PC-9 (cell line): ENCODE measurements at regions of chr12 and their contacts with region 1.

Region 1: DNA sequence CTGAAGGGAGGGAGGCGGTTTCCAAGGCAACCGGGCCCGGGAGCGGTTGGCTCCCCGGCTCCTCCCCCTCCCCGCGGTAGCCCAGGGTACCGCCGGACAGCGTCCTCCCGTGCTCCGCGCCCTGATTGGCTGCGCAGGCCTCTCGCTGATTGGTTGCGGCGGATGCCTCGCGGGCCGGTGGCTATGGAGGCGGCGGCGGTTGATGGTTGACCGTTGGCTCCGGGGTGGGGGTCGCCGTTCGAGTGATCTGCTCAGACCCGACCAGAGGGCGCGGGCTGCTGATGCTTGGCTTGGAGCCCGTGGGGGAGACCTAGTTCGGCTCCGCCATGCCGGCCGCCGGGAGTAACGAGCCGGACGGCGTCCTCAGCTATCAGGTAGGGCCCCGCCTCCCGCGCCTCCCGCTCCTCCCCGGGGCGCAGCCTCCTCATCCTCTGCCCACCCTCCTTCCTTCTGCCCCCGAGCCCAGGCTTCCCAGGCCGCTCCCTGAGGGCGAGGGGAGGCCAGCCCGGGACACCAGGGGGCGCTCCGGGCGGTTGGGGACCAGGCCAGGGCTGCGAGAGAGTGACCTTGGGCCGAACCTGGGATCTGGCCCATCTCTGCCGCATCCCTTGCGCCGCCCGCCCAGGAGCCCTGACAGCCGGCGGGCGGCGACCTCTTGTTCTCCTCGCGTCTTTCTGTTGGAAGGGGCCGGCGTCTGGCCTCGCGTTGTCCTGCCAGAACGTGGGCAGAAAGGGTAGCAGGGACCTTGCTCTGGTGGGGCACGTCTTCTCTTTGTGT is at the start of gene SLC4A8:
- DNase-seq: peak in 1 of 2 experiments; percentile 53
- H3K4me3 ChIP-seq: no peak within 1 kb of the TSS
- H3K27ac ChIP-seq: no peak within 1 kb of the TSS
- H3K4me1 ChIP-seq: no peaks in the 10 kb centered on the region
- H3K27me3 ChIP-seq: no peaks in the 10 kb centered on the region
- CTCF ChIP-seq: peak; percentile 55; the same call in 1 of the 2 replicates
- total RNA-seq, gene SLC4A8: 2.6 and 3.0 TPM in 2 replicates

Region 2: GRCh38 chr12:51335931-51336330 is 88.9 kb before region 1 on chr12:
- CTCF ChIA-PET with region 1: no interaction called
- POLR2A ChIA-PET with region 1: interaction called, 16 read pairs
- intact Hi-C with region 1: no loop called
- DNase-seq: no peak
- H3K4me3 ChIP-seq: no peak overlapping the region
- H3K27ac ChIP-seq: no peak overlapping the region
- H3K4me1 ChIP-seq: peaks cover 19% of the 10 kb centered on the region
- H3K27me3 ChIP-seq: no peaks in the 10 kb centered on the region
- CTCF ChIP-seq: no peak

Region 3: GRCh38 chr12:51531978-51532497 is 107.2 kb after region 1 on chr12:
- CTCF ChIA-PET with region 1: interaction called, 6 read pairs
- POLR2A ChIA-PET with region 1: no interaction called
- intact Hi-C with region 1: loop called (anchors 1 kb)
- DNase-seq: peak in 1 of 2 experiments; percentile 73
- H3K4me3 ChIP-seq: no peak overlapping the region
- H3K27ac ChIP-seq: no peak overlapping the region
- H3K4me1 ChIP-seq: no peaks in the 10 kb centered on the region
- H3K27me3 ChIP-seq: peaks cover 14% of the 10 kb centered on the region
- CTCF ChIP-seq: peak; percentile 87

Region 4: DNA sequence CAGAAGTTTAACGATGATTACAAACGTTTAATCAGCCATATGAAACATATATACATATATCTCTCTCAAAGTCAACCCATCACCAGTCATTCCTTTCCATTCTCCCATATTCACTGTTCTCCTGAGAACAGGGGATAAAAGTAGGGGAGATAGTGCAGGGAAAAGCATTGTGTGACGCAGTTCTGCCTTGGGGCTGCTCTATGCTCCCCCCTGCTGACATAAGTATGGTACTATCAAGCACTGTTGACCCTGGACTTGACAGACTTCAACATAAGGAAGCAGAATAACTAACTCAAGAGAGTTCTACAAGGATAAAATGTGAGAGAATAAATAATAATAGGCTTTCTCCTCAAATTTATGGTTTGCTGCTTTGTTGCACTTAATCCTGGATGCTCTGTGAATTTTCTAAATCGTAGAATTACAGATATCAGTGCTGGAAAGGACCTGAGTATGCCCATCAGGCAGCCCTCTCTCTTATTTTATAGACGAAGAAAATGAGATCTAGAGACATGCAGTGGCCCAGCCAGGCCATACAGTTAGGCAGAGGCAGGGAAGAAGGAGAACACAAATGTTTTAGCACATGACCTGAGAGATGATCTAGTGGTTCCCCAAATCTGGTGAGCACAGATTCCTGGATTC is 253.4 kb after region 1 on chr12:
- CTCF ChIA-PET with region 1: no interaction called
- POLR2A ChIA-PET with region 1: no interaction called
- intact Hi-C with region 1: loop called (anchors 1 kb)
- DNase-seq: peak in 1 of 2 experiments; percentile 4
- H3K4me3 ChIP-seq: no peak overlapping the region
- H3K27ac ChIP-seq: no peak overlapping the region
- H3K4me1 ChIP-seq: no peaks in the 10 kb centered on the region
- H3K27me3 ChIP-seq: peaks cover 54% of the 10 kb centered on the region
- CTCF ChIP-seq: peak; percentile 68

Region 5: DNA sequence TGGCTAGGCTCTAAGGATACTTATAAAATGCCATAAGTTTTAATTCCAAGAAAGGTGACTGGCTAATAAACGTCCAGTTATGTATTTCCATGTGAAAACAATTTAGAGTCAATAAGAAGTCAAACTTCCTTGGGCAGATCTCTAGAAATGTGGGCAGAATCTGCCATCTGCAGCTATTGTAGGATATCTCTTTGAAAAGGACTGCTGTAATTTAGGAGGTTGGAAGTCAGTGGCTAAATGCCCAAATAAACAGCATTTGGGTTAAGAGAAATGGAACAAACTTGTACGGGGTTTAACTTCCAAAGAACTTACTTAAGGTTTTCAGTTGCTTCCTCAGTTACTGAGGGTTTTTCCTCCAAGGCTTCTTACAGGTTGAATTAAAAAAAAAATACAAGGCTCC is 302.1 kb after region 1 on chr12:
- CTCF ChIA-PET with region 1: no interaction called
- POLR2A ChIA-PET with region 1: no interaction called
- intact Hi-C with region 1: no loop called
- DNase-seq: no peak
- H3K4me3 ChIP-seq: no peak overlapping the region
- H3K27ac ChIP-seq: no peak overlapping the region
- H3K4me1 ChIP-seq: no peaks in the 10 kb centered on the region
- H3K27me3 ChIP-seq: peaks cover 61% of the 10 kb centered on the region
- CTCF ChIP-seq: no peak

Region 6: GRCh38 chr12:51823875-51824565 is 399.2 kb after region 1 on chr12:
- CTCF ChIA-PET with region 1: no interaction called
- POLR2A ChIA-PET with region 1: no interaction called
- intact Hi-C with region 1: loop called (anchors 5 kb)
- DNase-seq: peak; percentile 30 to 39
- H3K4me3 ChIP-seq: no peak overlapping the region
- H3K27ac ChIP-seq: no peak overlapping the region
- H3K4me1 ChIP-seq: no peaks in the 10 kb centered on the region
- H3K27me3 ChIP-seq: peaks cover 22% of the 10 kb centered on the region
- CTCF ChIP-seq: peak; percentile 61

Region 7: GRCh38 chr12:51871126-51871525 is 446.3 kb after region 1 on chr12:
- CTCF ChIA-PET with region 1: interaction called, 3 read pairs
- POLR2A ChIA-PET with region 1: no interaction called
- intact Hi-C with region 1: loop called (anchors 1 kb)
- DNase-seq: no peak
- H3K4me3 ChIP-seq: no peak overlapping the region
- H3K27ac ChIP-seq: no peak overlapping the region
- H3K4me1 ChIP-seq: no peaks in the 10 kb centered on the region
- H3K27me3 ChIP-seq: peaks cover 84% of the 10 kb centered on the region
- CTCF ChIP-seq: no peak

Region 8: DNA sequence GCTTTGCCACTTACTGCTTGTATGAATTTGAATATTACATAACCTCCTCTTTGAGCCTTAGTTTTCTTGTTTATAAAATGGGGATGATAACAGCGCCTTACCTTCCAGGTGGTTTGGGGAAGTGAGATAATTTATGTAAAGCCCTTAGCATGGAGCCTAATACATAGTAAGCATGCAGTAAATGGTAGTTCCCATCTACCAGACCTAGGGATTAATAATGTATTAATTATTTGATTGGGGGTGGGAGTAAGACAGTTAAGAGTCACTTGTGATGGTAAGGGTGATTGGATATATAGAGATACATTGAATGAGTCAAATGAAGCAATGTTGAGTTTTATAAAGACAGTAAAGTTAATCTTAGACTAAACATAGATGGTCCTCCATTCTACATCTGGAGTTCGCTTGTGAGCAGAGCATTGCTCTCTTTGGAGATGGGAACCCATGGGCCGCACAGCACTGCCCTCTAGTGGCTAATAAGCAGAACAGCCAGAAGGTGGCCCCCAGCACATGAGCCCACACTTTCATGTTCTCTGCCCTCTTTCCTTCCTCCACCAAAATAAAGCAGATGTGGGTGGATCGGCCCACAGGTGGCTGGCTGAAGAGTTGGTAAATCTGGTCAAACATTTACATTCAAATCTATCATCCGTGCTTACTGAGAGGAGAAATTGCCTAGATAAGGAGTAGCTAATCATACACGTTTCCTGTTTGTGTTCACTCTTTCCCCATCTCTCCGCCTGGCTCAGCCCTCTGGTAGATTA is 555.4 kb after region 1 on chr12:
- CTCF ChIA-PET with region 1: no interaction called
- POLR2A ChIA-PET with region 1: no interaction called
- intact Hi-C with region 1: loop called (anchors 1 kb)
- DNase-seq: peak in 1 of 2 experiments; percentile 43
- H3K4me3 ChIP-seq: no peak overlapping the region
- H3K27ac ChIP-seq: no peak overlapping the region
- H3K4me1 ChIP-seq: no peaks in the 10 kb centered on the region
- H3K27me3 ChIP-seq: no peaks in the 10 kb centered on the region
- CTCF ChIP-seq: peak; percentile 91